Activated CD4-positive, alpha-beta T cell treated with anti-CD3 and anti-CD28 coated beads for 36 hours (primary cell): ENCODE measurements at regions of chr12 and their contacts with region 1.

Region 1: GRCh38 chr12:91778938-91779400 is 366.7 kb downstream of the BTG1 start:
- DNase-seq: peak; percentile 63
- ATAC-seq: peak; percentile 91
- H3K4me3 Mint-ChIP-seq: peak overlapping the region; percentile 46
- H3K27ac Mint-ChIP-seq: peak overlapping the region; percentile 81
- H3K4me1 Mint-ChIP-seq: peaks cover 42% of the 10 kb centered on the region
- H3K27me3 Mint-ChIP-seq: no peaks in the 10 kb centered on the region

Region 2: DNA sequence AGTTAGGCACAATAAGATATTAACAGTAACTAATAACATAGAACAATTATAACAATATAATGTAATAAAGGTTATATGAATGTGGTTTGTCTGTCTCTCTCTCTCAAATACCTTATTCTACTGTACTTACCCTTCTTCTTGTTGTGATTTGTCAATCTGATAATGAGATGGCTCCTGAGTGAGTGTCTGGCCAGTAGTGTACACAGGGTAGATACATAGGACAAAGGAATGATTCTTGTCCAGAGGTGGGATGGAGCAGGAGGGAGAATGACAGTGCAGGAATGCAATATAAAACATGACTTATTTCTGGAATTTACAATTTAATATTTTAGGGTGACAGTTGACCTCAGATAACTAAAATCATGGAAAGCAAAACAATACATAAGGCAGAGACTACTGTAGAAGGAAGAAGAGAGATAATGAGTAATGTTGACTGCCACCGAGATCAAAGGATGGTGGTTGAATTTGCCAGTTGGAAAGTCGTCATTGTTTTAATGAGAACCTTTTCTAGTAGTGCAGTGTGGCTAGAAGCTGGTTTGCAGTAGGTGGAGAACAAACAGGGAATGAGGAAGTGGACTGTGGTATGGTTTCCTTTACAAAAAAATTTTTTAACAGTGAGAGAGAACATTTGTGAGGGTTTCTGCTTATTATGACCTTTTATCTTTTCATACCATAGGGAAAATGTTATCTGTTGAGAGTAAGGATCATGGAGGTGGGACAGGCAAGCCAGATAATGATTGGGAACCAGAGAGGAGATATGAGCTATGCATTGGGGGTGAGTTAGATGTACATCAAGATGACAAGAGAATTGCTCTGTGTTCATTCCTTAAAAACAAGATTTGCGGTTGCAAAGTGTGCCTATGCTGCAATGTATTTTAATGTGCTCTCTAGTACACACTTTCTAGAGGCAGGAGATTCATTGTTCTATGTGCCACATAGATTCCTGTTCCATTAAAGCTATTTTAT is 91.6 kb before region 1 on chr12:
- CTCF ChIA-PET with region 1: no interaction called
- POLR2A ChIA-PET with region 1: no interaction called
- intact Hi-C with region 1: loop called (anchors 2 to 5 kb)
- DNase-seq: peak; percentile 50
- ATAC-seq: peak; percentile 91
- H3K4me3 Mint-ChIP-seq: no peak overlapping the region
- H3K27ac Mint-ChIP-seq: peak overlapping the region; percentile 43
- H3K4me1 Mint-ChIP-seq: peaks cover 25% of the 10 kb centered on the region
- H3K27me3 Mint-ChIP-seq: no peaks in the 10 kb centered on the region

Region 3: DNA sequence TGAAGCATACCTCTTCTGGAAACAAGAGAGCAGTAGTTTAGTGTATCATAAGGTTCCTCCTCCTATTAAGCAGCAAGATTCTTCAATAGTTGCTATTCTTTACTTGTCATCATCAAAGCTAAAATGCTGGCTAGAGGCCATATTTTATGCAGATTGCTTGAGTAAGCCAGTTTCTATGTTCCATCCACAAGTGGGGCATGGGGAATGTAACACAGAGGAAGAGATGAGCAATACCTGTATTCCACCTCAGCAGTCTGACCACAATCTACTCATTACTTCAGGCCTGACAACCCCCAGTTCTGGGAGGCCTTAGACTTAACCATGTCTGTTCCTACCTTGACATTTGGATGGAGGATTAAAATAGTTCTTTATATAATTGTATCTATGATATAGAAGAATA is 56.9 kb before region 1 on chr12:
- CTCF ChIA-PET with region 1: no interaction called
- POLR2A ChIA-PET with region 1: no interaction called
- intact Hi-C with region 1: loop called (anchors 2 to 5 kb)
- DNase-seq: peak; percentile 38
- ATAC-seq: peak; percentile 98
- H3K4me3 Mint-ChIP-seq: no peak overlapping the region
- H3K27ac Mint-ChIP-seq: no peak overlapping the region
- H3K4me1 Mint-ChIP-seq: peaks cover 3% of the 10 kb centered on the region
- H3K27me3 Mint-ChIP-seq: no peaks in the 10 kb centered on the region